Left ventricle myocardium superior (tissue), 1 donor: ENCODE measurements at regions of chr12 and their contacts with region 1.

Region 1: GRCh38 chr12:46473634-46474329 is 101.2 kb upstream of the SLC38A2 start:
- DNase-seq: peak; percentile 63
- ATAC-seq: peak; percentile 93

Region 2: DNA sequence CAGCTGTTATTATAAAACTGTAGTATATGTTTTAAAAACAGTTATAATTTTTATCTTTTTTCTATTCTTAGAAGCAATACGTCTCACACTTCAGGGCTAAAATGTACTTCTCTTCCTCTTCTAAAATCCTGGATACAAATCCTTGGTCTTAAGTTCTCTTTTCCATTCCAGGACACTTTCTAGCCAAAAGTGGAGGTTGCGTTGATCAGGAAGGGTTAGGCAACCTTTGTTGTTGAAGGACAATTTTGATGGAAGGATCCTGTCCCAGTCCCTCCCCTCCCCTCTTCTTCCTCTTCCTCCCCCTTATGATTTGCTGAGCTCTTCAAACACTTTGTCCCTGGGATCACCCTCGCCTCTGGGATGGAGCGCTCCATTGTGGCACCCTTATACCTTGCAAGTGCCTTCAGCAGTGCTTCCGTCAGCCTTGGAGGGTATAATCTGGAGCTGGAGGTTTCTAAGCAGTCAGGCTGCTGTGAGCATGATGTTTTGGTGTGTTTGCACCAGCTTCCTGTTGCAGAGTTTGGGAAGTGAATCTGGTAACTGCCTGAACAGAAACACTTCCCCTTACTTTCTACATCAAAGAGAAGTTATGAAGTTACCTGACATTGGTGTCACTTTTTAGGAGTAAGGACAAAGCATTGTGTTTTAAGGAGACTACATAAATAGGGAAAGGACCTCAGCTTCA is 13.8 kb before region 1 on chr12:
- intact Hi-C with region 1: no loop called
- DNase-seq: no peak
- ATAC-seq: peak; percentile 23

Region 3: DNA sequence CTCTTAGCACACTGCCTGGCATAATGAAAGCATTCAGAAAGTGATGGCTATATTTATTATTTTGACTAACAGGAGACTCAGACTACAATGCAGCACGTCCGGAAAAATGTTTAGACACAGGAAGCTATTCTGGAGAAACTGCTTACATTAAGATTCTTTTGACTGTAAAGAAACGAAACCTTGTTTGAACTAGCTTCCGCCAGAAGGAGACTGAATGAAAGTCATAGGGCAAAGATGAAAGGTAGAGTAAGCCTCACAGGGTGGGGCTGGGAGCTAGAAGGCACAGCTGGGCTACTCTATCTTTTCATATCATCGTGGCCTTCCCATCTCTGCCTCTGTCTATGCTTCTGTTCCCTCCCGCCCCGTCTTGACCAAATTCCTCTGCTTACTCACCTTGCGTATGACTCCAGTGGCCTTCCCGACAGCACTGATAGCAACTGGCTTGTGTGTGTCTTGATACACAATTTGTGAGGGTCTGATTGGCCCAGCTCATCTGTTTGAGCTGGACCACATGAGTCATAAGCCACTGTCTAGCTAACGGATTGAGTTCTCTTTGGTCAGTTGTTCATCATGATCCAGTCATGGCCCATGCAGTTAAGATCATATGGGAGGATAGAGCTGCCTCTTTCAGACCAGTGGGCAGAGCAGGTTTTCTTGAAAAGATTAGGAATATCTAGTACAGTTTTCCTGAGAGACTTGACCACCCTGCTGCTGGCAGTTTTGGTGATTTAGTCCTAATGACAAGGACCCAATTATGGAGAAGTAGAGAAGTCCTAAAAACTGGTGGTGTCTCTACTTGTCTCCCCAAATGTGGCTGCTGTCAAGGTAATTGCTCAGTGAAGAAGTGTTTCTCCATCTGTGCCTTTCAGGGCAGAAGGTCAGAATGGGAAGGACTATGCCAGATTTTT is 50.3 kb after region 1 on chr12:
- intact Hi-C with region 1: loop called (anchors 10 kb)
- DNase-seq: no peak
- ATAC-seq: no peak

Region 4: DNA sequence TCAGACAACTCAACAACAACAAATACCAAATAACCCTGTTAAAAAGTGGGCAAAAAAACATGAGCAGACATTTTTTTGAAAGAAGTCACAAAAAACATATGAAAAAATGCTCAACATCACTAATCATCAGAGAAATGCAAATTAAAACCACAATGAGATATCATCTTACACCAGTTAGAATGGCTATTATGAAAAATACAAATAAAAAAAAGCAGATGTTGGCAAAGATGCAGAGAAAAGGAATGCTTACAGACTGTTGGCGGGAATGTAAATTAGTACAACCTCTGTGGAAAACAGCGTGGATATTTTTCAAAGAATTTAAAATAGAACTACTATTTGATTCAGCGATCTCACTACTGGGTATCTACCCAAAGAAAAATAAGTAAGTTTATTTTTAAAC is 238.0 kb after region 1 on chr12:
- intact Hi-C with region 1: no loop called
- DNase-seq: no peak
- ATAC-seq: no peak